Breast epithelium (tissue), 4 donors: ENCODE measurements at regions of chr9 and their contacts with region 1.

Region 1: DNA sequence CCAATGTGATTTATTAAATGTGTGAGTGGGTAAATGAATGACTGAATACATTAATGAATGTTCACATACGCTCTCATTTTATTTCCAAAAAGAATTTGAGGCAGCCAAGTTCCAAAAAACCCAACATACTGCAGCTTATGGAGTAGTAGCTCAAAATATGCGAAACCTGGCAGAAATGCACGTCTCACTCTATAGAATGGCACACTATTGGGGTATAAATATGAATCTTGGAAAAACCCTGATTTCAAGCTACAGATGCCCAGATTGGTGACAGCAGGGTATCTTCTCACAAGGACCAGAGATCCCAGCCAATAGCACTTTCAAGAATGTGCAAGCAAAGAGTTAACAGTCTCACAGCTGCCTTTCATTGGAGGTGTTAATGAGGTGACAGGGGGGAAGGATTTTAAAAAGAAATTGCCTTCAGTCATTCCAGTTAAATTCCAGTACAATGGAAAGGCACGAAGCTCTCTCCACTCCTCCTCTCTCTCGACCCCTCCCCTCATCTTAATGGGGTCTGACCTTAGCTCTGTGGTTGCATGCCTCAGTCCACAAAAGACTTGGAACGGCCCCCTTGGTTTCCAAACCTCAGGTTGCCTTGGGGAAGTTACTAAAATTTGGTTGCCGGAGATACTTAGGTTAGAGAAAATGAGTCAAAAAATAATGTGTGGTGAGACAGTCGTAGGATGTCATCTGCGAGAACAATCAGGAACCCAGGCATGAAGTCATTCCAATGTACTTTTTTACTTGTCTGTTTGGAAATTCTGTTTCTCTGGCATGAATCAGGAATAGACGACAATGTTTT is 307.4 kb downstream of the NFIB start:
- DNase-seq: no peak
- H3K4me3 ChIP-seq: no peak overlapping the region
- H3K27ac ChIP-seq: no peak overlapping the region
- H3K4me1 ChIP-seq: no peaks in the 10 kb centered on the region
- H3K27me3 ChIP-seq: no peaks in the 10 kb centered on the region
- CTCF ChIP-seq: no peak
- POLR2A ChIP-seq: no peak

Region 2: GRCh38 chr9:13787234-13787833 is 219.3 kb before region 1 on chr9:
- intact Hi-C with region 1: no loop called
- DNase-seq: no peak
- H3K4me3 ChIP-seq: peak overlapping the region; percentile 4 to 41 (median 12)
- H3K27ac ChIP-seq: peak overlapping the region; percentile 34 to 54
- H3K4me1 ChIP-seq: no peaks in the 10 kb centered on the region
- H3K27me3 ChIP-seq: no peaks in the 10 kb centered on the region
- CTCF ChIP-seq: no peak
- POLR2A ChIP-seq: no peak

Region 3: DNA sequence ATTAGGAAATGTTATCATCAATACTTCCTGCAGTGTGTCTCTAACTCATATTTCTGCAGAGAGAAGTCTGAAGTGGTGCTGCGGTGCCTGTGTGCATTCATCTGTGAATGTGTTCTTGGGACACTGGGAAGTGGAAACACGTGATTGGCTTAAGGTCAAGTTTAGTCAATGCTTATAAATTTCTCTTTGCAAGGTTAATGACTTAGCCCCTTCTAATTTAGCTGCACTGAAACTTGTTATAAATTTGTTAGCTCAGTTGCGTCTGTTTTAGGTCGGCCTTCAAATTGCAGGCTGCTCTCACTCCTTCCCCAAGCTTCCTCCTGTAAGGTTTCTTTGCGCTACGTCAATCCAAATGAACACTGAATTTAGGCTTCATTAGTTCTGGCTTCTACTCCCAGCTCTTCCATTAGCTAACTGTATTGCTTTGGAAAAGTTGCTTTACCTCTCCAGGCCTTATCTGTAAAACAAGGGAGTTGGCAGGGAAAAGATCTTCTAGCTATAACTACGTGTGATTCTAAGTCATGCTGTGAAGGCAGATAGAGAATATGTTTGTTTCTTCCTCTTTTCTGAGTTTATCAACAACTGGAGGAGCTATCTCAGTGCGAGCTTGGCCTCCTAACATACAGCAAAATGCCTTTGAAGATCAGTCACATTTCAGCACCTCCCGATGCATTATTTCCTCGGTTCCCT is 34.5 kb before region 1 on chr9:
- intact Hi-C with region 1: no loop called
- DNase-seq: no peak
- H3K4me3 ChIP-seq: no peak overlapping the region
- H3K27ac ChIP-seq: no peak overlapping the region
- H3K4me1 ChIP-seq: no peaks in the 10 kb centered on the region
- H3K27me3 ChIP-seq: no peaks in the 10 kb centered on the region
- CTCF ChIP-seq: no peak
- POLR2A ChIP-seq: no peak

Region 4: DNA sequence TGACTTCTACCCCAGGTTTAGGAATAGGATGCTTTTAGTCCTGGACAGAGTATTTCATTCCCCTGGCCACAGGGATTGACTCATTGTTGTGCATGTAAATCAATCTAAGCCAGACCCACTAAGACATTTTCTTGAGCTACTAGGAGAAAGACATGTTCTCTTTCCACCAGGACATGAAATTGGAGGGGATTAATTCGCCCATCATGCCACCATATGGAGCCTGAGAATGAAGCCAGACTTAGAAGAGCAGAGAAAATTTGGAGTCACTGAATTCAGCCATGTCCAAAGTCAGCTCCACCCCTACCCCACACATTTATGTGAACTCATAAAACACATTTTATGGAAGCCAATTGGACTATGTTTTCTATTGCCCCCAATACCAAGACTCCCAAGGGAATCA is 15.2 kb before region 1 on chr9:
- intact Hi-C with region 1: loop called (anchors 1 kb)
- DNase-seq: no peak
- H3K4me3 ChIP-seq: no peak overlapping the region
- H3K27ac ChIP-seq: no peak overlapping the region
- H3K4me1 ChIP-seq: no peaks in the 10 kb centered on the region
- H3K27me3 ChIP-seq: no peaks in the 10 kb centered on the region
- CTCF ChIP-seq: no peak
- POLR2A ChIP-seq: no peak